AG04450 (cell line): ENCODE measurements at regions of chr19 and their contacts with region 1.

Region 1: DNA sequence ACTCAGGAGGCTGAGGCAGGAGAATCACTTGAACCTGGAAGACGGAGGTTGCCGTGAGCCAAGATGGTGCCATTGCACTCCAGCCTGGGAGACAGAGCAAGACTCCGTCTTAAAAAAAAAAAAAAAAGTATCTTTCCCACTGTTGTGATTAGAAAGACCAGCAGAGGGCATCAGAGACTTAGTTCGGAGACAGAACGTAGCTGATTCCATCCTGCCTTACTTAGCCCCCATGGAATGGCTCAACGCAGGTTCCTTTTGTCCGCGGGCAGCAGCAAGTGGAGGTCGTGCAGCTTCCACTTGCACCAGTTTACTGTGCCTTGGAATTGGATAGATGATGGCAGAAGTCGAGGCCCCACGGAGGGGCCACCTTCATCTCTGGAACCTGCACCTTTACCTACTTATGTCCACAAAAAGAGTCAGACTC is 8.1 kb downstream of the TIMM29 start:
- DNase-seq: peak; percentile 71
- H3K4me3 ChIP-seq: no peak overlapping the region
- H3K27ac ChIP-seq: no peak overlapping the region
- H3K27me3 ChIP-seq: no peaks in the 10 kb centered on the region
- CTCF ChIP-seq: peak; percentile 69

Region 2: GRCh38 chr19:10808937-10809652 is 127.6 kb before region 1 on chr19:
- CTCF ChIA-PET with region 1: no interaction called
- POLR2A ChIA-PET with region 1: no interaction called
- DNase-seq: no peak
- H3K4me3 ChIP-seq: no peak overlapping the region
- H3K27ac ChIP-seq: no peak overlapping the region
- H3K27me3 ChIP-seq: no peaks in the 10 kb centered on the region
- CTCF ChIP-seq: no peak

Region 3: GRCh38 chr19:10870955-10871603 is 65.6 kb before region 1 on chr19 and contains the start of gene CARM1:
- CTCF ChIA-PET with region 1: interaction called, 13 read pairs
- POLR2A ChIA-PET with region 1: no interaction called
- DNase-seq: peak; percentile 97
- H3K4me3 ChIP-seq: peak within 1 kb of the TSS; percentile 84
- H3K27ac ChIP-seq: peak within 1 kb of the TSS; percentile 61
- H3K27me3 ChIP-seq: no peaks in the 10 kb centered on the region
- CTCF ChIP-seq: peak; percentile 49
- polyA plus RNA-seq, gene CARM1: 23.5 and 26.0 TPM in 2 replicates

Region 4: DNA sequence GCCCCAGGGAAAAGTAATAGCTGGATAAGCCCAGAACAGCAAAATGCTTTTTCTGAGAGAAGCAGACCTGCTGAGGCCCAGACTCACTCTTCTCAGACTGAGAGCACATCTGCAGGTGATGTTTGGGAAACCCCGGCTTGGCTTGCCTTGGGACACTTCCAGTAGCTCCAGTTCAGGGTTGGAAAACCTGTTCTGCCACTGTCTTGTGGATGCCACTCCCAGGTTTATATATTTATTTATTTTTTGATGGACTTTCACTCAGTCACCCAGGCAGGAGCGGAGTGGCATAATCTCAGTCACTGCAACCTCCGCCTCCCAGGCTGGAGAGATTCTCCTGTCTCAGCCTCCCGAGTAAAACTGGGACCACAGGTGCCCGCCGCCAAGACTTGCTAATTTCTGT is 16.1 kb after region 1 on chr19:
- CTCF ChIA-PET with region 1: interaction called, 22 read pairs
- POLR2A ChIA-PET with region 1: no interaction called
- DNase-seq: no peak
- H3K4me3 ChIP-seq: no peak overlapping the region
- H3K27ac ChIP-seq: no peak overlapping the region
- H3K27me3 ChIP-seq: no peaks in the 10 kb centered on the region
- CTCF ChIP-seq: no peak

Region 5: DNA sequence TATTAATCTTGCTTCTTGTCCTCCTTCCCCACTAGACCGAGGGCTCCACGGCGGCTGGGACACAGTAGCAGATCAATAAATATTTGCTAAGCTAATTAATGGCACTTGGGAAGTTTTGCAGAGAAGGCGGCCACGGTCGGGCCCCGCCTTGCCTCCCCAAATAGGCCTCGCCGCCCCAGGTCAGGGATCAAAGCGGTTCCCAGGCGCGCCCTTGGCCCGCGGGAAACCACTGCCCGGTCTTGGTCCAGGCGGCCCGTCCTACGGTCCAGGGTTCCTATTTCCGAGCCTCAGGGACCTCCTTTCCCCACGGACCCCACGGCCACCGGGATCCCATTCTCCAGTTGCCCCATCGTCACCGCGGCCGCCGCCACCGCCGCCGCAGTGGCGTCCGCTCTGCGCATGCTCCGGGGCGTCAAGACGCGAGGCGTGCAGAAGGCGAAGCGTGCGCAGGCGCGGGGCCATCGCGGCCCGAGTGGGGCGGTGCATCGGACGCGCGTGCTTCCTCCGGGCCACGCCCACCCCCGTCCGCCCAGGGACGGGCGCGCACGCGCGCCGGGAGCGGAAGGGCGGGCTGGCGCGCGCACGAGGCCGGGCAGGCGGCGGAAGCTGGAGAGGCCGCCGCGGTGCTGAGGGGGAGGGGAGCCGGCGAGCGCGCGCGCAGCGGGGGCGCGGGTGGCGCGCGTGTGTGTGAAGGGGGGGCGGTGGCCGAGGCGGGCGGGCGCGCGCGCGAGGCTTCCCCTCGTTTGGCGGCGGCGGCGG is 23.8 kb after region 1 on chr19 and contains the start of gene SMARCA4:
- CTCF ChIA-PET with region 1: interaction called, 16 read pairs
- POLR2A ChIA-PET with region 1: interaction called, 5 read pairs
- DNase-seq: peak; percentile 87
- H3K4me3 ChIP-seq: peak within 1 kb of the TSS; percentile 86
- H3K27ac ChIP-seq: peak within 1 kb of the TSS; percentile 52
- H3K27me3 ChIP-seq: no peaks in the 10 kb centered on the region
- CTCF ChIP-seq: no peak
- polyA plus RNA-seq, gene SMARCA4: 41.6 and 63.5 TPM in 2 replicates

Region 6: DNA sequence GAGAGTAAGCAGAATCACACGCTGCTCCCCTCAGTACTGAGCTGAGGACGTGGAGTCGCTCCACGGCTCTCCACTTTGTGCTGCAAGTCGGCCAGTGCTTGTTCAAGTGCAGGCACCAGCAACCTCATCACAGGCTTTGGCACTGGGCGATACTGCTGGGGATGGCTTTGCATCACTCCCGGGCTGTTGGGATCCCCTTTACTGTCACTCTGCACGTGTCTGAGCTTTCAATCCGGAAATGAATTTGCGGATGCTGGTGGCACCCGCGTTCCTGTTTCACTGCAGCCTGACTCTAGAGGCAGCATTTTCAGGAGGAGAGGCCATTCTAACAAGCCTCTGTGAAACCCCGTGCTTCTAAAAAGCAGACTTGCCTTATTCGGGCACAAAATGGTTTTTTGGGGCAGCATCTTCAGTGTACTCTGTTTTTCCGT is 43.3 kb after region 1 on chr19:
- CTCF ChIA-PET with region 1: interaction called, 20 read pairs
- POLR2A ChIA-PET with region 1: interaction called, 4 read pairs
- DNase-seq: no peak
- H3K4me3 ChIP-seq: no peak overlapping the region
- H3K27ac ChIP-seq: no peak overlapping the region
- H3K27me3 ChIP-seq: no peaks in the 10 kb centered on the region
- CTCF ChIP-seq: no peak

Region 7: GRCh38 chr19:10998045-10998533 is 61.4 kb after region 1 on chr19:
- CTCF ChIA-PET with region 1: interaction called, 14 read pairs
- POLR2A ChIA-PET with region 1: no interaction called
- DNase-seq: no peak
- H3K4me3 ChIP-seq: no peak overlapping the region
- H3K27ac ChIP-seq: no peak overlapping the region
- H3K27me3 ChIP-seq: no peaks in the 10 kb centered on the region
- CTCF ChIP-seq: no peak

Region 8: DNA sequence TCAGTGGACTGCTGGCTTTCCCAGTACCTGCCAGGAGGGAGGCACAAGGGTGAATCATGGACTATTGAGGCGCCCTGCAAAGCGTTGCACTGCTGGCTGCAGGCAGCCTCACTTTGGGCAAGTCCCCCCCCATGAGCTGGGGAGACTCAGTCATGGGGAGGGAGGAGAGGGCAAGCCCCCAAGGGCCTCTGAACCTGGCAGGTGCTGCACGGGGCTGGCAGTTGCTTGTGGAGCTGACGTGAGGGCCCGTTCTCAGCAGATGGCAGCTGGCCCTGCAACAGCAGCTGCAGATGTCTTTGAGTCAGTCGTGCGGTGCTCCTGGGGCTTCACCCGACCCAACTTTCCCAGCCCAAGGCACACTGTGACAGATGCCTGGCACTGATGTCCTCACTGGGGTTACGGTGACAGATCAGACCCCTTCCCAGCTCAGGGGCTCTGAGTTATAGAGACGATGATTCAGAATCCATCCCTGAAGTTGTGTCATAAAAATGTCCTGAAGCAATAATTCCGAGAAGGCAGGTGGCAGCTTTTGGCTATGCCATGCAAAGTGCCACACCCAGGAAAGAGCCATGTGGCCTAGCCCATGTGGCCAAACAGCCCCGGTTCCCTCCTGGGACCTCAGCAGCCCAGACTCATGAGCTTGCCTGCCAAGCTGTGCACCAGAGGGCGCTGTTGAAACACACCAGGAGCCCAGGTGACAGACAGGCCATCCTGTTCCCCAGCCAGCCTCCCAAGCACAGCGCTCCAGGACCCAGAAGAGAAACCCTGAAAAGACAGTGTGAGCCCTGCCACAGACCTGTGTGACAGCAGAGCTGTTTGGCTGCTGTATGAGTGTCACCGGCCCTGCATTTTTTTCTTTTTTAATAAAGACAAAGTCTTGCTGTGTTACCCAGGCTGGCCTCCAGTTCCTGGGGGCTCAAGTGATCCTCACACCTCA is 99.0 kb after region 1 on chr19:
- CTCF ChIA-PET with region 1: interaction called, 13 read pairs
- POLR2A ChIA-PET with region 1: interaction called, 4 read pairs
- DNase-seq: peak; percentile 27
- H3K4me3 ChIP-seq: no peak overlapping the region
- H3K27ac ChIP-seq: no peak overlapping the region
- H3K27me3 ChIP-seq: no peaks in the 10 kb centered on the region
- CTCF ChIP-seq: peak; percentile 85

Region 9: DNA sequence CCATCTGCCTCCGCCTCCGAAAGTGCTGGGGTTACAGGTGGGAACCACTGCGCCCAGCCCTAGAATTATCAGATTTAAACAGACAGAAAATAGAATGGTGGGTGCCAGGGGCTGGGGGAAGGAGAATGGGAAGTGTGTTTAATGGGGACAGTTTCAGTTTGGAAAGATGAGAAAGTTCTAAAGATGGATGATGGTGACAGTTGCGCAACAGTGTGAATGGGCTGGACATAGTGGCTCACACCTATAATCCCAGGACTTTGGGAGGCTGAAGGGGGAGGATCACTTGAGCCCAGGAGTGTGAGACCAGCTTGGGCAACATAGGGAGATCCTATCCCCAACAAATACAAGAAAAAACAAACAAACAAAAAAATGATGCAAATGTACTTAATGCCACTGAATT is 244.8 kb after region 1 on chr19:
- CTCF ChIA-PET with region 1: no interaction called
- POLR2A ChIA-PET with region 1: no interaction called
- DNase-seq: no peak
- H3K4me3 ChIP-seq: no peak overlapping the region
- H3K27ac ChIP-seq: no peak overlapping the region
- H3K27me3 ChIP-seq: no peaks in the 10 kb centered on the region
- CTCF ChIP-seq: no peak